ENCODE measurements at regions of chrX and their contacts with region 1.

Region 1: DNA sequence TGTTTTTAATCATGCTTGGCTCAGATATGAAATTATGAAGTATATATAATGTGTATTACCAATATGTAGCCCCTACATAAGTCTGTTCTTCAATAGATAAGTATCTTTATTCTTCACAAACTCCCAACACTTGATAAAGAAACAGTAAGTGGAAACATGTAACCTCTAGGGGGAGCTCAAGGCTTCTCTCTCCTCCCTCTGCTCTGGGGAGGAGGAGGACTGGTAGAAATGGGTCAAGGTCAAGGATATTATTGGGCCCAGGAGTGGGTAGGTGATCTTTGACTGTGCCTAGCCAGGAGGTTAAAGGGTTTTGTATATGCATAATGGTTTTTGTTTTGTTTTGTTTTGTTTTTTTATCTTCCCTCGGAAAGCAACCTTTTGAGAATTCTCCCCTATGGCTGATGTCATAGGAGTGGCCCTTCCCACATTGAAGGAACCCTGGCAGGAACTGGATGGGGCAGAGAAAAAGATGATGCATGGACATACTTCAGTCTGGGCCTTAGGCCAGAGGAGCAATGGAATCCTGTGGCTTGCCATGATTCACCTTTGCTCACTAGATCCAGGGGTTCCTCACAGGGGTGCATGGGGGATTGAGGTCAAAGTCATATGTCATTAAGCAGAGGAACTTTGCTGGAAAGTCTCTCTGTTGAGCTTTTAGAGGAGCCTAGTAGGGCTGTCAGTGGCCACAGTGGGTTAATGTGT is 460.3 kb downstream of the MID1IP1 start:
- DNase-seq: peak; percentile 53
- H3K4me3 ChIP-seq: no peak overlapping the region
- H3K27ac ChIP-seq: no peak overlapping the region
- H3K4me1 ChIP-seq: no peaks in the 10 kb centered on the region
- H3K27me3 ChIP-seq: no peaks in the 10 kb centered on the region
- CTCF ChIP-seq: peak; percentile 34 to 44
- POLR2A ChIP-seq: no peak

Region 2: GRCh38 chrX:39275500-39276068 is 14.0 kb after region 1 on chrX:
- CTCF ChIA-PET with region 1: no interaction called
- POLR2A ChIA-PET with region 1: no interaction called
- dilution Hi-C with region 1: no loop called
- intact Hi-C with region 1: no loop called
- DNase-seq: no peak
- H3K4me3 ChIP-seq: no peak overlapping the region
- H3K27ac ChIP-seq: no peak overlapping the region
- H3K4me1 ChIP-seq: no peaks in the 10 kb centered on the region
- H3K27me3 ChIP-seq: no peaks in the 10 kb centered on the region
- CTCF ChIP-seq: no peak
- POLR2A ChIP-seq: no peak

Region 3: DNA sequence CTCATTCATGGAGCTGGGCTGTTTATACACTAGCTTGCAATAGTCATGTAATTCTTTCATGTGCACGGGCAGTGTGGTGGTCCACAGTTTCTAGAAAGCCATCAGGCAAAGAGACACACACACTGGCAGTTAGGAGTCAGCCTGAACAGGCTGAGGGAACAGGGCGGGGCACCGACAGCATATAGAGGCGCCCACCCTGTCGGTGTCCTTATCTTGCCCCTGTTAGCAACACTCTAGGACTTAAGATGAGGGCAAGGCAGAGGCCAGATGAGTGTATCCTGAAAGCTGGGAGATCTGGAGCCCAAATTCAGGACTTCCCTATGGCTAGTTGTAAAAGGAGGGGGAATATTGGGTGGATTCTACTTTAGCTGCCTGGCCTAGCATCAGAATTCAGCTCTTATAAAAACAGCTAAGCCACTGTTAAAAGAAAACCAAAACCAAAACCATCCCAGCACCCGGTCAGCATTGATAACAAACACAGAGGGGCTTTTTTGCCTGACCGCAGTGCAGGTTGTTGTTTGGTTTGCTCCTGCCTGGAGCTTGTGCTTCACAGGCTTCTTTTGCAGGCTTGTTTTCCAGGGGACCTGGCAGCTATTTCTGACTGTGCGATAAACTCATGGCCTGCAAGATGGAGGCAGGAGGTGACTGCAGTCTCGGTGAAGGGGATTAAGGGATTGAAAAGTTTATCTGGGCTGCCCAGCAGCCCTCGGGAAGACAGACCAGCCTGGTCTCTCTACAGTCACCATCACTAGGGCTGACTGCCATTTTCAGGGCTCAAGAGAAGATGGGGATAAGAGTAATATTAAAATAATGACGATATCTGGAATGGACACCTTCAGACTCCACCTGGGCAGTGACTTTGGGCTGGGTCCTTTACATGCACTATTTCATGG is 178.6 kb after region 1 on chrX:
- CTCF ChIA-PET with region 1: interaction called, 15 read pairs
- POLR2A ChIA-PET with region 1: no interaction called
- dilution Hi-C with region 1: no loop called
- intact Hi-C with region 1: loop called (anchors 1 kb)
- DNase-seq: no peak
- H3K4me3 ChIP-seq: no peak overlapping the region
- H3K27ac ChIP-seq: no peak overlapping the region
- H3K4me1 ChIP-seq: no peaks in the 10 kb centered on the region
- H3K27me3 ChIP-seq: no peaks in the 10 kb centered on the region
- CTCF ChIP-seq: no peak
- POLR2A ChIP-seq: no peak

Region 4: GRCh38 chrX:39445336-39445735 is 183.7 kb after region 1 on chrX:
- CTCF ChIA-PET with region 1: interaction called, 15 read pairs
- POLR2A ChIA-PET with region 1: no interaction called
- dilution Hi-C with region 1: no loop called
- intact Hi-C with region 1: loop called (anchors 1 kb)
- DNase-seq: peak; percentile 14
- H3K4me3 ChIP-seq: no peak overlapping the region
- H3K27ac ChIP-seq: no peak overlapping the region
- H3K4me1 ChIP-seq: no peaks in the 10 kb centered on the region
- H3K27me3 ChIP-seq: no peaks in the 10 kb centered on the region
- CTCF ChIP-seq: peak in 1 of 2 donors; percentile 36
- POLR2A ChIP-seq: no peak

Measured in endothelial cell of umbilical vein (primary cell).